Activated CD4-positive, alpha-beta T cell treated with anti-CD3 and anti-CD28 coated beads for 36 hours (primary cell): ENCODE measurements at regions of chr17 and their contacts with region 1.

Region 1: DNA sequence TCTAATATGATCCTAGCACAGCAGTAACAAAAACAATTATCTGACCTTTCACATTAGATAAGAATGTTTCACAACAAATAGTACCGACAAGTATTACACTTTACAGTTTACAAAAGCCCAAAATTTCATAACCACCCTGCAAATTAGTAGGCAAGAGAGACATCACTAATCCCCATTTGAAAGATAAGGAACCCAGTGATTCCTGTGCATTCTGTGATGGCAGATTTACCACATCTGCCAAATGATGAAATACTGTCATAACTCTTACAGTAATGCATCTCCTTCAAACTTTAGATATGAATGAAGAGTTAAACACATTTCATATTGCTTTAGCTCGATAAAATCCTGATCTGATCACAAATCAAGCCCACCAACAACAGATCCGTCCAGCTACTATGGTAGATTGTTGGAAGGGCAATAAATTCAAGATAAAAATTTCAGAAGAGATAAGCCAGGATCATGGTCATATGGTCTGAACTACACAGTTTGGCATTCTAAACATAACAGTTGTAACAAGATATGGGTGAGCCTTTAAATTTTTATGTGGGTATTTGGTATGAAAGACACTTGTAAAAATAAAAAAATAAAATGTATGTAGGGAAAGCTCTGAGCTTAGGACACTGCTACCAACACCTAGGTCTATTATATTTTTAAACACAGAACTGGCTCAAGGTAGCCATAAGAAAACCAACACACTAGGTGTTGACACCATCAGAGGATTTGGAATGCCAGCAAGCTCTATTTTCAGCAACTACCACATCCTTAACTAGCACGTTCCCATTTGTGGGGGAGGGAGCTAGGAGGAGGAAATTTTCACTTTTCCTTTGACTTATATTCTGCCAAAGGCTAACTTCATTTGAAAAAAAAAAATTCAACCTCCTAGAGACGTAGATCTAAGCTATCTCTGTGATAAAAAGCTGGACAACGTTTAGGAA is 9.3 kb downstream of the YWHAE start:
- DNase-seq: no peak
- ATAC-seq: peak; percentile 40
- H3K4me3 Mint-ChIP-seq: peak overlapping the region; percentile 9
- H3K27ac Mint-ChIP-seq: peak overlapping the region; percentile 87
- H3K4me1 Mint-ChIP-seq: peaks cover 81% of the 10 kb centered on the region
- H3K27me3 Mint-ChIP-seq: no peaks in the 10 kb centered on the region

Region 2: GRCh38 chr17:1298606-1299005 is 92.1 kb before region 1 on chr17:
- CTCF ChIA-PET with region 1: no interaction called
- POLR2A ChIA-PET with region 1: no interaction called
- intact Hi-C with region 1: no loop called
- DNase-seq: peak; percentile 67
- ATAC-seq: peak; percentile 69
- H3K4me3 Mint-ChIP-seq: no peak overlapping the region
- H3K27ac Mint-ChIP-seq: no peak overlapping the region
- H3K4me1 Mint-ChIP-seq: peaks cover 48% of the 10 kb centered on the region
- H3K27me3 Mint-ChIP-seq: no peaks in the 10 kb centered on the region

Region 3: GRCh38 chr17:1374431-1375177 is 16.1 kb before region 1 on chr17:
- CTCF ChIA-PET with region 1: interaction called, 37 read pairs
- POLR2A ChIA-PET with region 1: interaction called, 10 read pairs
- intact Hi-C with region 1: loop called in 1 of 2 experiments (anchors 2 kb)
- DNase-seq: no peak
- ATAC-seq: peak; percentile 70
- H3K4me3 Mint-ChIP-seq: peak overlapping the region; percentile 25
- H3K27ac Mint-ChIP-seq: peak overlapping the region; percentile 59
- H3K4me1 Mint-ChIP-seq: peaks cover 75% of the 10 kb centered on the region
- H3K27me3 Mint-ChIP-seq: no peaks in the 10 kb centered on the region

Region 4: GRCh38 chr17:1379930-1380313 is 10.8 kb before region 1 on chr17:
- CTCF ChIA-PET with region 1: interaction called, 37 read pairs
- POLR2A ChIA-PET with region 1: interaction called, 10 read pairs
- intact Hi-C with region 1: loop called in 1 of 2 experiments (anchors 2 kb)
- DNase-seq: peak; percentile 53
- ATAC-seq: peak; percentile 83
- H3K4me3 Mint-ChIP-seq: no peak overlapping the region
- H3K27ac Mint-ChIP-seq: peak overlapping the region; percentile 77
- H3K4me1 Mint-ChIP-seq: peaks cover 77% of the 10 kb centered on the region
- H3K27me3 Mint-ChIP-seq: no peaks in the 10 kb centered on the region